Left colon (tissue), 2 donors: ENCODE measurements at regions of chr15 and their contacts with region 1.

Region 1: GRCh38 chr15:89177633-89178306 is 43.6 kb downstream of the RLBP1 start:
- DNase-seq: peak; percentile 34 to 69
- ATAC-seq: peak; percentile 67

Region 2: GRCh38 chr15:88904624-88905327 is 273.0 kb before region 1 on chr15:
- intact Hi-C with region 1: loop called in 1 of 2 experiments (anchors 10 kb)
- DNase-seq: peak; percentile 63 to 88
- ATAC-seq: peak; percentile 90

Region 3: DNA sequence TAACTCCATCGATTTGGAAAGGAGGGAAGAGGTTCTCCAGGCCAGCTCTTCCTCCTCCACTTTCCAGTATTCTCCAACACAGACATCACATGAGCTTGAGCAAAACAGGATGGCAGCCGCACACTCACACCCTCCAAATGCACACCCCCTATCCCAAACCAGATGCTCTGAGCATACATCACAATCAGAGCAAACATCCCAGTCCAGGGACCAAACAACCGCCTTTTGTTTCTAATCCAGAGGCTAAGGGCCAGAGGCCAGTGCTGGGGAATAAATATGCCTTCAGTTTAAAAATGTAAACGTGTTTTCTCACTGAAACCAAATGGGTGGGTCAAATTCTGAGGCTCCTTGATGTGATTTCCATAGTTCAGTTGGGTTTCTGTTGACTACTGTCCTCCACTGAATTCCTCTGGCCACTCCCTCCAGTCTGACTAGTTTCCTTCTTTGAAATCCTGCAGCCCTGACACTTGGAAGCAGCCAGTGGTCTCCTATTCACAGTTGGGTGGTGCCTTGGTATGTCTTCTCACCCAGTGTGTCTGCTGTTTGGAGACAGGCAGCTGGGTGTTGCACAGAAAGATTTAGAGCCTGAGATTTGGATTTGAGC is 245.4 kb before region 1 on chr15:
- intact Hi-C with region 1: loop called in 1 of 2 experiments (anchors 10 kb)
- DNase-seq: no peak
- ATAC-seq: no peak

Region 4: GRCh38 chr15:89057504-89058133 is 120.2 kb before region 1 on chr15:
- intact Hi-C with region 1: loop called (anchors 2 to 10 kb)
- DNase-seq: peak; percentile 61 to 83
- ATAC-seq: peak; percentile 88